ENCODE measurements at regions of chr11 and their contacts with region 1.

Region 1: GRCh38 chr11:74357449-74357848 is 40.8 kb downstream of the PGM2L1 start:
- DNase-seq: no peak
- H3K4me3 ChIP-seq: no peak overlapping the region
- CTCF ChIP-seq: no peak

Region 2: GRCh38 chr11:74443071-74443864 is 85.8 kb after region 1 on chr11:
- in situ Hi-C with region 1: loop called (anchors 5 kb)
- DNase-seq: peak; percentile 33
- H3K4me3 ChIP-seq: no peak overlapping the region
- CTCF ChIP-seq: peak; percentile 27